ENCODE measurements at regions of chr9 and their contacts with region 1.

Region 1: GRCh38 chr9:127537792-127538191 is 74.3 kb upstream of the STXBP1 start:
- DNase-seq: no peak
- H3K4me3 ChIP-seq: no peak overlapping the region
- H3K27ac ChIP-seq: peak overlapping the region; percentile 93 to 96
- H3K4me1 ChIP-seq: peaks cover 63% of the 10 kb centered on the region
- H3K27me3 ChIP-seq: no peaks in the 10 kb centered on the region
- CTCF ChIP-seq: peak in 3 of 4 experiments; percentile 23 to 60 (median 48)
- POLR2A ChIP-seq: no peak

Region 2: DNA sequence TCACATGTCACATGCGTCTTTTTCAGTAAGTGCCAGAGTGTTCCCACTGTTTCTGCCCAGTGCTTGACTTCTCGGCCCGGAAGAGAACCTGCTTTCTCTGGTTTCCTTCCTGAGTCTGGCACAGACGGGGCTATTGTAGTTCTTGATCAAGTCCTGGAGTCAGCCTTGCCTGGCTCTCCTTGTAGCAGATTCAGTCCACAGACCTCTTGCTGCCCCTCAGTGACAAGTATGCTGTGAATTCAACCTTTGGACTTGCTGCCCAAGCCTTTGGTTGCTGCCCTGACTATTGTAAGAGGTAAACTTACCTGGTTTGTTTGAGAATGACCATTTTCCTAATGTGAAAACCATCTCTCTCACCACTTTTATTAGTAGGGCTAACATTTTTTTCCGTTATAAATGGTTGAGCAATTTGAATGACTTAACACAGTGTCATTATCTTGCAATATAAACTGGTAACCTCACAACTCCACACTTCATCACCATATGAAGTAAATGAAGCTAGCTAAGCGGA is 652.6 kb before region 1 on chr9:
- intact Hi-C with region 1: no loop called
- DNase-seq: no peak
- H3K4me3 ChIP-seq: no peak overlapping the region
- H3K27ac ChIP-seq: no peak overlapping the region
- H3K4me1 ChIP-seq: peaks cover 5% of the 10 kb centered on the region
- H3K27me3 ChIP-seq: no peaks in the 10 kb centered on the region
- CTCF ChIP-seq: no peak
- POLR2A ChIP-seq: no peak

Region 3: DNA sequence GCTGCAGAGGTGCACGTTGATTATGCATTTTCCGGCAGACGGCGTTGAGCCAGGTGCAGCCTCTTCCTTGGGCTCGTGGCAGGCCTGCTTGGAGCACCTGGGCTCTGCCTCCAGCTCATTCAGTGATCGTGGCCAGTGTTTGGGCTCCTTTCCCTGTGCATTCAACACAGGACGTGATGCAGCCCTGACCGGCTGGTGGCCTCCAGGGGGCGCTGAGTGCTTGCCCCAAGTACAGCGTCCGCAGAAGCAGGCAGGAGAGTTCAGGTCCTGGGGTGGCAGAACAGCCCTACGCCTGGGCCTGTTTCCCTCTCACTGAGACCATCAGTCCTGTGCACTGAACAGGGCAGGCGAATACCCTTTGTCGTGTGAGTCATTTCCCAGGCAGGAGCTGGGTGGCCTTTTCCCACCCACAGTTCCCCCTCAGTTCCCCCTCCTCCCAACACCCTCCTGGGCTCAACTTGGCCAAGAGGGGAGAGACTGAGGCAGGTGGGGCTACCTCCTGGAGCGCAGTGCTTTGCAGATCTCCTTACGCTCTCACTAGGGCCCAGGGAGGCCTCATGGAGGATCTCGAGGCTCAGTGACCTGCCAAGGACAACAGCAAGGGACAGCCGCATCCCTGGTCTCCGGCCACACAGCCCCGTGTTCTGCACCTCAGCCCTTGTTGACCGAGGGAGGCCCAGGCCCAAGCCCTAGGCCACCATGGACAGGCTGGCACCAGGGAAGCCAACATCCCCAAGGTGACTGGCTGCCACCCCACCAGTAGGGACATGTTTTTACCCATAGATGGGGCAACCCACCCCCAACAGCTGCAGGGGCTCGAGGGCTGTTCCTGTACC is 33.6 kb before region 1 on chr9:
- intact Hi-C with region 1: loop called (anchors 2 kb)
- DNase-seq: peak; percentile 88
- H3K4me3 ChIP-seq: no peak overlapping the region
- H3K27ac ChIP-seq: peak overlapping the region; percentile 55 to 67
- H3K4me1 ChIP-seq: peaks cover 8% of the 10 kb centered on the region
- H3K27me3 ChIP-seq: no peaks in the 10 kb centered on the region
- CTCF ChIP-seq: peak; percentile 81 to 96 (median 90)
- POLR2A ChIP-seq: no peak

Region 4: DNA sequence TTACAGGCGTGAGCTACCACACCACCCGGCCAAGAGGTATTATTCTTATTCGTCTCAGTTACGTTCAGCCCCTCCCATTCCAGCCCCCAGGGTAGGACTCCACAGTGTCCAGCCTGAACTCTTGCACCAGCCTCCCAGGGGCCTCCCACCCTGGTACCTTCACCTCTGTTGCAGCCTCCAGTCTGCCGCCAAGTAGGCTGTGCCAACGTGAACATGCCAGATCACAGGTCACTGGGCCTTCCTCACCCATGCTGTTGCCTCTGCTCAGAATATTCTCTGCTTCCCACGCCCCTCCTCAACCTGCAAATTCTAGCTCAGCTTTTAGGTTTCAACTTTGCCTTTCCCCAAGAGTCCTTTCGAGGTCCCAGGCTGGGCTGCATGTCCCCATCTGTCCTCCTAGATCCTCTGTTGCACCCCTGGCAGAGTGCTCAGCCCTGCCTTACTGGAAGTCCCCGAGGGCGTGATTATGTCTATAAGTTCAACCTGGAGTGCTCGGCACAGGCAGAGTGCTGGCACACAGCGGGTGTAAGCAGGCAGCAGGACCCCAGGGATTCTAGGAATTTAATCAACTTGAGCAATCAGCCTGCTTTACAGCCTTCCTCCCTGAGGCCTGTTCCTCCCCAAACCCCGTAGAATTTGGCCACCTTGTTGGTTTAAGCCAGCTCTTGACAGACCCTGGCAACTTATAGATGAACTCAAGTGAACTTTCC is 61.2 kb after region 1 on chr9:
- intact Hi-C with region 1: no loop called
- DNase-seq: no peak
- H3K4me3 ChIP-seq: no peak overlapping the region
- H3K27ac ChIP-seq: no peak overlapping the region
- H3K4me1 ChIP-seq: no peaks in the 10 kb centered on the region
- H3K27me3 ChIP-seq: no peaks in the 10 kb centered on the region
- CTCF ChIP-seq: no peak
- POLR2A ChIP-seq: no peak

Region 5: GRCh38 chr9:127614961-127615360 is 77.2 kb after region 1 on chr9:
- intact Hi-C with region 1: no loop called
- DNase-seq: no peak
- H3K4me3 ChIP-seq: no peak overlapping the region
- H3K27ac ChIP-seq: no peak overlapping the region
- H3K4me1 ChIP-seq: no peaks in the 10 kb centered on the region
- H3K27me3 ChIP-seq: no peaks in the 10 kb centered on the region
- CTCF ChIP-seq: no peak
- POLR2A ChIP-seq: no peak

Measured in prostate gland (tissue), 2 donors.